Left cardiac atrium (tissue), 4 donors: ENCODE measurements at regions of chr12 and their contacts with region 1.

Region 1: GRCh38 chr12:77724367-77724957 is 106.2 kb upstream of the NAV3 start:
- DNase-seq: no peak
- ATAC-seq: peak; percentile 58 to 61

Region 2: DNA sequence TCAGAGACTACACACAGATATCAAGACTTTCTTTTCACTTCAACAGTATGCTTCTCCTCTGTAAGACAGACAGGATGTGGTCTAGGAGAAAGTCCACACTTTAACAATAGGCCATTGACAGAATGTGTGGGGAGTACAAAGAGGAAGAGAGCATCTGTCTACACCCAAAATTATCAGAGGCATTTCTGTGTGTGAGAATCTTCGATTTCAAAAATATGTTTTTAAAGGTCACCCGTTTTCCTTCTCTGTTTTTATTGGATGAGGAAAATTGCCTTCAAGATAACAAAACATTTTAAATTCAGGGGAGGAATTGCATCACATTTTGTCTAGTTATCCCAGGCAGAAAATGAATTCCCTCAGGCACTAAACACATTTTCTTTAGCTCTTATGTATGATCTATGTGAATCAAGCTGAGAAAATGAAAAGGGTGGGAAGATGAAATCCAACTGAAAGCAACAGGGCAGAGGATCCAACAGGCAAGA is 122.6 kb after region 1 on chr12:
- intact Hi-C with region 1: no loop called
- DNase-seq: no peak
- ATAC-seq: peak in 1 of 2 donors; percentile 80

Region 3: DNA sequence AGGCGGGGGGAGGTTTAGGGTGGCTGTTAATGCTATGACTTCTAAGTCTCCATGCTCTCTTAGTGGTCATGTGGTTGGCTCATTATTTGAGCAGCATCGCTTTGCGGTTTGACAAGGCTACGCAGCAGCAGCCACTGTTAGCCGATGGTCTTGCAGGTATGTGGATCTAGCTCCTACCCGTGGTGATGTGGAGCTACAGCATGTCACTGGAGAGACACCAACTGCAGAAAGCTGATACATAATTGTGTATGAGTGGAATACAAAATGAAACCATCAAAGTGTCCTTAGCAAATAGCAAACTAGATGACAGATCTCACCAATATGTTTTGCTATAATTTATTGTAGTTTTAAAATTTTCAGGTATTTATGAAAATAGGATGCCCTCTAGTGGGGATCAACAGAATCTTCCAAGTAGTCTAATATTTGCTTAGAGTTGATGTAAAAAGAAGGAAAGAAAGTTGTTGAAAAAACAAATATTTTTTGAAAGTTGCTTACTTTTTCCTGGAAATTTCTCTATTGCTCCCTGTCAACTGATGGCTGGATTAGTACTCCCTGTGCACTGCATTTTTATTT is 201.2 kb after region 1 on chr12:
- intact Hi-C with region 1: loop called (anchors 1 to 5 kb)
- DNase-seq: peak; percentile 69
- ATAC-seq: peak; percentile 95